HCT116 (cell line): ENCODE measurements at regions of chr15 and their contacts with region 1.

Region 1: DNA sequence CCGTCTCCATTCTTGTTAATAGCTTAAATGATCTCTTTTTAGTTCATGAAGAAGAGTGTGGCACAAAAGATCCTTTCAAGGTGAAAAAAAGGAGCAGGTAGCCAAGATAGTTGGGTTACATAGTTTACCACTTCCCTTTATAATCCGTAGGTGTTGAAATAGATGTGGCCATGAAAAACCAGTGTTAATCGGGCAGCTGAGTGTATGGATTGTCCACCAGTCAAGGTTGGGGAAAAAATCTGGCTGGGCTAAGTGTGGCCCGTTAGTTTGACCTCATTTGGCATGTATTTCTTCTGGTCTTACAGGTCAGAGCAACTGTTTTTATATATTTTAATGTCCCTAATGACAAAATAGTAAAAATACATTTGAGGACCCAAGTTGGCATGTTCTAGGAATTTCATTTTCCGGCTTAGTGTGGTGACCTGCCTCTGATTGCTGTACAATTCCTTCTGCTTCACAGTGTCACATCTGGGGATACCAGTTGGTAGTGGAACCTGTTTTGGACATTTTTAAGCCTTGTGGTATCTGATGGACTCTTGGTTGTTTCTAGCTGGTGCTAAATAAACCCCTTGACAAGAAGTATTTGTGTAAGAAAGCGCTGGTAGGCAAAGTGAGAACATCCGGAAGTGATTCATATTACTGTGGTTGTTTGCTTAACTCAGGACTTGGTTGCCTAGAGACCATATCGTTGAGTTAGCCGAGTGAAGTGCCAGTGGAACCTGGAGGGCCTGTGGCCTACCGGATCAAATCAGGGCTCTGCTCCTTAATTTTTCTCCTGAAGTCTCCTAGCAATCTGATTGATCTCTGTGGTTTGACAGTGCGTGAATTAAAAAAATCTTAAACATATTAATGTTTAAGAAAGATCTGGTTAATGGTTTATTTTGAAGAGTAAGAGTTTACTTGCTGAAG is 12.6 kb downstream of the IQGAP1 start:
- DNase-seq: peak; percentile 91
- ATAC-seq: peak; percentile 89
- H3K4me3 ChIP-seq: peak overlapping the region; percentile 22 to 50
- H3K27ac ChIP-seq: peak overlapping the region; percentile 76
- H3K4me1 ChIP-seq: peaks cover 44 to 51% of the 10 kb centered on the region in 2 experiments
- H3K27me3 ChIP-seq: no peaks in the 10 kb centered on the region
- CTCF ChIP-seq: no peak
- POLR2A ChIP-seq: no peak
- RAD21 ChIP-seq: 0 out of 2 replicates have a peak, but pooled peaks have one; percentile 15

Region 2: GRCh38 chr15:90336705-90337141 is 63.9 kb before region 1 on chr15:
- CTCF ChIA-PET with region 1: no interaction called
- POLR2A ChIA-PET with region 1: no interaction called
- RAD21 ChIA-PET with region 1: no interaction called
- intact Hi-C with region 1: no loop called
- DNase-seq: no peak
- ATAC-seq: no peak
- H3K4me3 ChIP-seq: no peak overlapping the region
- H3K27ac ChIP-seq: no peak overlapping the region
- H3K4me1 ChIP-seq: peaks cover 3 to 14% of the 10 kb centered on the region in 2 experiments; a peak in 3 of 4 replicates
- H3K27me3 ChIP-seq: no peaks in the 10 kb centered on the region
- CTCF ChIP-seq: no peak
- POLR2A ChIP-seq: no peak
- RAD21 ChIP-seq: no peak

Region 3: GRCh38 chr15:90387537-90388461 is 12.9 kb before region 1 on chr15 and contains the start of gene IQGAP1:
- CTCF ChIA-PET with region 1: no interaction called
- POLR2A ChIA-PET with region 1: interaction called, 13 read pairs
- RAD21 ChIA-PET with region 1: interaction called in 1 of 2 experiments, 3 read pairs
- intact Hi-C with region 1: loop called (anchors 1 kb)
- DNase-seq: peak; percentile 92
- ATAC-seq: peak; percentile 95
- H3K4me3 ChIP-seq: peak within 1 kb of the TSS; percentile 75 to 92
- H3K27ac ChIP-seq: peak within 1 kb of the TSS; percentile 70
- H3K4me1 ChIP-seq: peaks cover 6 to 15% of the 10 kb centered on the region in 2 experiments; a peak in 3 of 4 replicates
- H3K27me3 ChIP-seq: no peaks in the 10 kb centered on the region
- CTCF ChIP-seq: no peak
- POLR2A ChIP-seq: peak; percentile 28
- RAD21 ChIP-seq: no peak
- total RNA-seq, gene IQGAP1: 113 TPM

Region 4: GRCh38 chr15:90412356-90413194 is 11.9 kb after region 1 on chr15:
- CTCF ChIA-PET with region 1: no interaction called
- POLR2A ChIA-PET with region 1: interaction called, 5 read pairs
- RAD21 ChIA-PET with region 1: no interaction called
- intact Hi-C with region 1: loop called (anchors 1 kb)
- DNase-seq: peak; percentile 84
- ATAC-seq: peak; percentile 95
- H3K4me3 ChIP-seq: peak overlapping the region; percentile 14 to 50; a peak in 3 of 4 replicates
- H3K27ac ChIP-seq: peak overlapping the region; percentile 55
- H3K4me1 ChIP-seq: peaks cover 41 to 50% of the 10 kb centered on the region in 2 experiments
- H3K27me3 ChIP-seq: no peaks in the 10 kb centered on the region
- CTCF ChIP-seq: no peak
- POLR2A ChIP-seq: no peak
- RAD21 ChIP-seq: peak; percentile 20; the same call in 1 of the 2 replicates